ENCODE measurements at regions of chr5 and their contacts with region 1.

Region 1: GRCh38 chr5:141420855-141421496 is at the start of gene PCDHGA11:
- DNase-seq: peak in 1 of 2 donors; percentile 56
- ATAC-seq: peak; percentile 46 to 61 (median 53)
- H3K4me3 ChIP-seq: peak within 1 kb of the TSS; percentile 6
- H3K4me3 Mint-ChIP-seq: peak within 1 kb of the TSS; percentile 58
- H3K27ac ChIP-seq: no peak within 1 kb of the TSS
- H3K27ac Mint-ChIP-seq: no peak within 1 kb of the TSS
- H3K4me1 ChIP-seq: peaks cover 11% of the 10 kb centered on the region
- H3K4me1 Mint-ChIP-seq: peaks cover 10 to 18% of the 10 kb centered on the region in 2 donors
- H3K27me3 ChIP-seq: peaks cover 72% of the 10 kb centered on the region
- H3K27me3 Mint-ChIP-seq: peaks cover 60% of the 10 kb centered on the region in 2 donors
- CTCF ChIP-seq: peak; percentile 56
- total RNA-seq, gene PCDHGA11: 0.40 to 1.2 (median 0.83) TPM

Region 2: DNA sequence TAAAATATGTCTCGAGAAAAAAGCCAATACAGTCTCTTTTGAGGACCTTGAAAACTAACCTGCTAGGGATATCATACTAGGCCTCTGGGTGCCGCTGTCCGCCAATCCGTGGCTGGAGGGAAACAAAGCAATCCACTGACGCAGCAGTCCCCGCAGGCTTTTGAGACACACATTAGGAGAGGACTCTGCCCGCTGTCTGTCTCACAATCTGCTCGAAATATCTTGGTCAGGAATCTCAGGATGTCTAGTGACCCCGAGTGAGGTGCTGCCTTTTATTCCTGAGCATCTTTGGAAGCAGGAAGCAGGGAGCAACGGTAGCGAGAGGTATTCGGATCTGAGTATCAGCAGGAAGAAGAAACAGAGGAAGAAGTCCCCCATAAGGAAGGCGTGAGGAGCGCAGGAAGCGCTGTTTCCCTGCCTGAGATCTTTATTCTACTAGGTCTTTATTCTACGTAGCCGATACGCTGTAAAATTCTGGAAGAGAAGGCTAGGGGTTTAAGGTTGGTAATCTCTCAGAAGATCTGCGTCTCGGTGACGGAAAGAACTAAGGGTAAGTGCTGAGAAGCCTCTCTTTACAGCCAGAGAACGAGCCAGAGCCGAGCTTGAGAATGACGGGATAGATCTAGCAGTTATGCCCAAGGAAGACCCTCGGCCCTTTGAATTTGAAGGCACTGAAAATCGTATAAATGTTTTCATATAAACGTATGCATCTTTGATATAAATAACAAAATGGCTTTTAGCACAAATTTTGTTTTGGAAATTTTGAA is 94.7 kb before region 1 on chr5:
- intact Hi-C with region 1: no loop called
- DNase-seq: peak; percentile 52 to 81
- ATAC-seq: peak; percentile 64 to 94 (median 85)
- H3K4me3 ChIP-seq: peak overlapping the region; percentile 32
- H3K4me3 Mint-ChIP-seq: peak overlapping the region; percentile 92
- H3K27ac ChIP-seq: peak overlapping the region; percentile 22
- H3K27ac Mint-ChIP-seq: peak overlapping the region in 1 of 2 donors; percentile 92
- H3K4me1 ChIP-seq: peaks cover 8% of the 10 kb centered on the region
- H3K4me1 Mint-ChIP-seq: peaks cover 7 to 8% of the 10 kb centered on the region in 2 donors
- H3K27me3 ChIP-seq: peaks cover 15% of the 10 kb centered on the region
- H3K27me3 Mint-ChIP-seq: peaks cover 35 to 60% of the 10 kb centered on the region in 2 donors
- CTCF ChIP-seq: peak; percentile 67

Region 3: GRCh38 chr5:141387233-141387949 is 33.6 kb before region 1 on chr5 and contains the start of gene PCDHGB4:
- intact Hi-C with region 1: loop called (anchors 5 kb)
- DNase-seq: peak in 1 of 2 donors; percentile 10
- ATAC-seq: peak; percentile 81 to 89 (median 84)
- H3K4me3 ChIP-seq: no peak within 1 kb of the TSS
- H3K4me3 Mint-ChIP-seq: peak within 1 kb of the TSS; percentile 78
- H3K27ac ChIP-seq: no peak within 1 kb of the TSS
- H3K27ac Mint-ChIP-seq: no peak within 1 kb of the TSS
- H3K4me1 ChIP-seq: peaks cover 4% of the 10 kb centered on the region
- H3K4me1 Mint-ChIP-seq: peaks cover 0 to 8% of the 10 kb centered on the region in 2 donors
- H3K27me3 ChIP-seq: peaks cover 60% of the 10 kb centered on the region
- H3K27me3 Mint-ChIP-seq: peaks cover 66 to 75% of the 10 kb centered on the region in 2 donors
- CTCF ChIP-seq: peak; percentile 15
- total RNA-seq, gene PCDHGB4: 0.31 to 0.40 TPM in 2 of 3 donors, not detected in the other

Region 4: GRCh38 chr5:141496038-141496437 is 75.1 kb after region 1 on chr5:
- intact Hi-C with region 1: no loop called
- DNase-seq: no peak
- ATAC-seq: no peak
- H3K4me3 ChIP-seq: no peak overlapping the region
- H3K4me3 Mint-ChIP-seq: no peak overlapping the region
- H3K27ac ChIP-seq: no peak overlapping the region
- H3K27ac Mint-ChIP-seq: no peak overlapping the region
- H3K4me1 ChIP-seq: peaks cover 15% of the 10 kb centered on the region
- H3K4me1 Mint-ChIP-seq: peaks cover 7 to 15% of the 10 kb centered on the region in 2 donors
- H3K27me3 ChIP-seq: peaks cover 18% of the 10 kb centered on the region
- H3K27me3 Mint-ChIP-seq: peaks cover 24 to 25% of the 10 kb centered on the region in 2 donors
- CTCF ChIP-seq: no peak